Panc1 (cell line): ENCODE measurements at regions of chr11 and their contacts with region 1.

Region 1: DNA sequence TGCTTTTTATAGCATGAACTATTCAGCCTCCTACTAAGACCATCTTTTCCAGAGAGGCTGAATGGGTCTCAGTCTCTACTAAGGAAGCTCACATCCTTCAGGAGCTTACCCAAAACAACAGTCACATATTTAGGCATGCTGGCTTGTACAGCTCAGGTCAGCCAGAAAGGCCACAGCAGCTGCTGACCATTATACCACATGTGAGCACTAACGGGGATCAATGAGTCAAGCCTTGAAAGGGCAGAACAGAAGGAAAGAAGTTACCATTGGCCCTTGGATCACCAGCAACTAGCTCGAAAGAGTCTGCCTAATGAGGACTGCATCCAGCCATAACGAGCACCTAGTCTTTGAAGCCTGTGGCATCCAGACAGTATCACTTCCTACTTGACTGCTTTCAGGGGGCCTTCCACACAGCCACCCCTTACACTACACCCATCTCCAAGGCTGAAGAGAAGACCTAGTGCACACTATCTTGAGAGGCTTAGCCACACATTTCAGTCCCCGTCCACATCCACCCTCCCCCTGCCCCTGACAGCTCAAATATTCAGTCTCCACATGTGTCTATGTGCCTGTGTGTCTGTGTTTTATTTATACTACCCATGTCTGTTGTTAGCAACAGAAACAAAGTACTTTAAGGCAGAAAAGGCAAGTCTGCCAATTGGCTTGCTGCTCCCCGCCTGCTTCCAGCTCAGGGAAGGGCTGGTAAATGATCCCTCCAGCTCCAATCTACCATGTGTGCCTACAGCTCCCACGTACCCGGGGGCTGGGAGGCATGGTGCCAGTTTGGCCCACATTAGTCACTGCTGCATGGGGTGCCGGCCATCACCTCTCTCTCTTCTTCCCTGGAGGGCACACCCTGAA is 95.5 kb downstream of the RPL27A start:
- DNase-seq: no peak
- ATAC-seq: no peak
- H3K4me3 ChIP-seq: no peak overlapping the region
- H3K27ac ChIP-seq: no peak overlapping the region
- H3K4me1 ChIP-seq: no peaks in the 10 kb centered on the region
- H3K27me3 ChIP-seq: no peaks in the 10 kb centered on the region
- CTCF ChIP-seq: no peak

Region 2: GRCh38 chr11:8709002-8709672 is 69.0 kb before region 1 on chr11:
- CTCF ChIA-PET with region 1: no interaction called
- POLR2A ChIA-PET with region 1: interaction called, 16 read pairs
- in situ Hi-C with region 1: no loop called
- intact Hi-C with region 1: no loop called
- DNase-seq: no peak
- ATAC-seq: no peak
- H3K4me3 ChIP-seq: no peak overlapping the region
- H3K27ac ChIP-seq: no peak overlapping the region
- H3K4me1 ChIP-seq: no peaks in the 10 kb centered on the region
- H3K27me3 ChIP-seq: no peaks in the 10 kb centered on the region
- CTCF ChIP-seq: no peak

Region 3: GRCh38 chr11:8789864-8790263 is 11.7 kb after region 1 on chr11:
- CTCF ChIA-PET with region 1: no interaction called
- POLR2A ChIA-PET with region 1: no interaction called
- in situ Hi-C with region 1: no loop called
- intact Hi-C with region 1: no loop called
- DNase-seq: no peak
- ATAC-seq: 0 out of 2 replicates have a peak, but pooled peaks have one; percentile 24
- H3K4me3 ChIP-seq: no peak overlapping the region
- H3K27ac ChIP-seq: no peak overlapping the region
- H3K4me1 ChIP-seq: no peaks in the 10 kb centered on the region
- H3K27me3 ChIP-seq: no peaks in the 10 kb centered on the region
- CTCF ChIP-seq: no peak

Region 4: GRCh38 chr11:8925711-8926110 is 147.6 kb after region 1 on chr11:
- CTCF ChIA-PET with region 1: no interaction called
- POLR2A ChIA-PET with region 1: no interaction called
- in situ Hi-C with region 1: no loop called
- intact Hi-C with region 1: no loop called
- DNase-seq: no peak
- ATAC-seq: no peak
- H3K4me3 ChIP-seq: no peak overlapping the region
- H3K27ac ChIP-seq: no peak overlapping the region
- H3K4me1 ChIP-seq: no peaks in the 10 kb centered on the region
- H3K27me3 ChIP-seq: no peaks in the 10 kb centered on the region
- CTCF ChIP-seq: no peak